GM12878 (cell line): ENCODE measurements at regions of chr1 and their contacts with region 1.

Region 1: GRCh38 chr1:178310685-178311105 is 186.1 kb downstream of the CLEC20A start:
- DNase-seq: peak; percentile 20
- ATAC-seq: peak; percentile 81
- H3K4me3 ChIP-seq: no peak overlapping the region
- H3K27ac ChIP-seq: no peak overlapping the region
- H3K4me1 ChIP-seq: no peaks in the 10 kb centered on the region
- H3K27me3 ChIP-seq: no peaks in the 10 kb centered on the region
- CTCF ChIP-seq: peak; percentile 57 to 71 (median 69)
- EP300 ChIP-seq: no peak
- POLR2A ChIP-seq: no peak
- RAD21 ChIP-seq: peak; percentile 64

Region 2: GRCh38 chr1:178294654-178295053 is 16.0 kb before region 1 on chr1:
- CTCF ChIA-PET with region 1: interaction called, 110 read pairs
- POLR2A ChIA-PET with region 1: no interaction called
- RAD21 ChIA-PET with region 1: interaction called, 8 read pairs
- SMC1A ChIA-PET with region 1: interaction called, 14 read pairs
- in situ Hi-C with region 1: no loop called
- intact Hi-C with region 1: no loop called
- DNase-seq: no peak
- ATAC-seq: peak; percentile 31; the same call in 1 of the 3 replicates
- H3K4me3 ChIP-seq: no peak overlapping the region
- H3K27ac ChIP-seq: no peak overlapping the region
- H3K4me1 ChIP-seq: no peaks in the 10 kb centered on the region
- H3K27me3 ChIP-seq: no peaks in the 10 kb centered on the region
- CTCF ChIP-seq: no peak
- EP300 ChIP-seq: no peak
- POLR2A ChIP-seq: no peak
- RAD21 ChIP-seq: no peak

Region 3: DNA sequence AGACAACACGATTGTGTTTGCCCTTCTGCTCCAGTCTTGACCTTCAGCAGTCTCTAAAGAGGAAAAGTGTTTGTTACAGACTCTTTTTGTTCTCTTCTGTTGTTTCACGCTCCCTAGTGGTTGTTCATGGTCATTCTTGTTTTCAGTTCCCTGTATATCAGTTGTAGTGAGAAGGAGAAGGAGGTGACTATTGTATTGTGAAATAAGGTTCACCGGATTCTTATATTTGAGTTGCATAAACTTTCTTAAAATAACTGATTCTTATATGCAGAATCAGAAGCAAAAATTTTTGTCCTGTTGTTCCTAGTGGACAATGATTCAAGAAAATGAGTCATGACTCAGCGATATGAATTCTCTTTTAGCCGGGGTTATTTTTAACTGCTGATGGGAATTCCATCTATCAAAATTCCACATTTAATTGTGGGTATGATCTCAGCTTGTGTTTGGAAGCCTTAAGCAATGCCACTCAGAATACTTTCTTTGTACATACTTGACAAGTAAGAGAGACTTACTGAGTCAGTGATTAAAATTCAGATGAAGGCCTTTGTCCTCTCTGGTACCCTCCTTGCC is 33.9 kb after region 1 on chr1:
- CTCF ChIA-PET with region 1: interaction called, 50 read pairs
- POLR2A ChIA-PET with region 1: no interaction called
- RAD21 ChIA-PET with region 1: interaction called, 10 read pairs
- SMC1A ChIA-PET with region 1: interaction called, 31 read pairs
- in situ Hi-C with region 1: no loop called
- intact Hi-C with region 1: no loop called
- DNase-seq: peak; percentile 1
- ATAC-seq: peak; percentile 90
- H3K4me3 ChIP-seq: no peak overlapping the region
- H3K27ac ChIP-seq: no peak overlapping the region
- H3K4me1 ChIP-seq: no peaks in the 10 kb centered on the region
- H3K27me3 ChIP-seq: no peaks in the 10 kb centered on the region
- CTCF ChIP-seq: peak; percentile 35 to 46 (median 42); a peak in 5 of 6 replicates
- EP300 ChIP-seq: no peak
- POLR2A ChIP-seq: no peak
- RAD21 ChIP-seq: 0 out of 2 replicates have a peak, but pooled peaks have one; percentile 18

Region 4: GRCh38 chr1:178412400-178412770 is 101.7 kb after region 1 on chr1:
- CTCF ChIA-PET with region 1: no interaction called
- POLR2A ChIA-PET with region 1: no interaction called
- RAD21 ChIA-PET with region 1: no interaction called
- SMC1A ChIA-PET with region 1: no interaction called
- in situ Hi-C with region 1: no loop called
- intact Hi-C with region 1: no loop called
- DNase-seq: no peak
- ATAC-seq: peak; percentile 93
- H3K4me3 ChIP-seq: peak overlapping the region; percentile 33; the same call in 1 of the 2 replicates
- H3K27ac ChIP-seq: peak overlapping the region; percentile 71
- H3K4me1 ChIP-seq: peaks cover 17% of the 10 kb centered on the region
- H3K27me3 ChIP-seq: no peaks in the 10 kb centered on the region
- CTCF ChIP-seq: no peak
- EP300 ChIP-seq: no peak
- POLR2A ChIP-seq: no peak
- RAD21 ChIP-seq: no peak

Region 5: GRCh38 chr1:178532392-178532791 is 221.7 kb after region 1 on chr1:
- CTCF ChIA-PET with region 1: interaction called, 18 read pairs
- POLR2A ChIA-PET with region 1: no interaction called
- RAD21 ChIA-PET with region 1: interaction called, 3 read pairs
- SMC1A ChIA-PET with region 1: interaction called, 6 read pairs
- in situ Hi-C with region 1: no loop called
- intact Hi-C with region 1: no loop called
- DNase-seq: no peak
- ATAC-seq: peak; percentile 97
- H3K4me3 ChIP-seq: no peak overlapping the region
- H3K27ac ChIP-seq: no peak overlapping the region
- H3K4me1 ChIP-seq: no peaks in the 10 kb centered on the region
- H3K27me3 ChIP-seq: no peaks in the 10 kb centered on the region; a peak in 1 of 4 replicates
- CTCF ChIP-seq: peak; percentile 87 to 93 (median 89); a peak in 5 of 6 replicates
- EP300 ChIP-seq: no peak
- POLR2A ChIP-seq: no peak
- RAD21 ChIP-seq: peak; percentile 88